Calu3 (cell line): ENCODE measurements at regions of chr22 and their contacts with region 1.

Region 1: DNA sequence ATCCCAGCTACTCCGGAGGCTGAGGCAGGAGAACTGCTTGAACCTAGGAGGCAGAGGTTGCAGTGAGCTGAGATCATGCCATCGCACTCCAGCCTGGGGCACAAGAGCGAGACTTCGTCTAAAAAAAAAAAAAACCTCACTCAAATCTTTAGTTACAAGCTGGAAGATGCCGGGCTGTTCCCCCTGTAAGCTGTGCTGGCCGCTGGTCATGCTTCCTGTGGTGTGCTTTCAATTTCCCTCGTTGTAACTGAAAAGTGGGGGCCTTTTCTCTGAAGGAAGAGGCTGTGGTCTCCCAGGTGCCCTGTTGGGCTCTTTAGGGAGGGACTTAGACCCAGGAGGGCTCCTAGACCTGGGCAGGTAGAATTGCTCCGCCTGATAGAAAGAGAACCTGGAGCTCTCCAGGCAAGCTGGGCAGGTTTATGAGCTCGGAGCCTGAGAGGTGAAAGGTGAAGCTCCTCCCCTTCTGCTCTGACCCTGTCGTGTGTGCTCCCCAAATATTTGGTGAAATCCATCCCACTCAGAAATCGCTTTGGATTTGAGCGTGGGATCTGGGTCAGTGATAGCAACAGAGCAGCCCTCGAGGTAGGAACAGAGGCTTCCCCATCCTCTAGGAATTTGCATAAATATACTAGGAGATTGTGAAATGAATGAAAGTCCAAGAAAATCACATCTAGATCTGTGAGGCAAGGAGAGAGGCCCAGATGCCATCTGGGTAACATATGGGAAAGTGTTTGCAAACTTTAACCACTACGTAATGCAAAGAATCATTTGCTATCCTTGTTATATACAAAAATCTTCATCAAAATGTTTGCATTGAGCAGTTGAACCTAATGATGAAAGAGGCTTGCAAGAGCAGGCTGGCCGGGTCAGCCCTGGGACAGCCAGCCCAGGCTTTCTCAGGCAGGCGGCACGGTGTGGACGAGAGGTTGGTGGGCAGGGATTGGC is 154.3 kb downstream of the FBXO7 start:
- DNase-seq: no peak
- H3K4me3 Mint-ChIP-seq: no peak overlapping the region
- H3K27ac Mint-ChIP-seq: no peak overlapping the region
- H3K4me1 Mint-ChIP-seq: no peaks in the 10 kb centered on the region
- H3K27me3 Mint-ChIP-seq: no peaks in the 10 kb centered on the region
- CTCF ChIP-seq: no peak

Region 2: GRCh38 chr22:32733923-32734514 is 105.1 kb after region 1 on chr22:
- CTCF ChIA-PET with region 1: no interaction called
- intact Hi-C with region 1: no loop called
- DNase-seq: no peak
- H3K4me3 Mint-ChIP-seq: no peak overlapping the region
- H3K27ac Mint-ChIP-seq: no peak overlapping the region
- H3K4me1 Mint-ChIP-seq: no peaks in the 10 kb centered on the region
- H3K27me3 Mint-ChIP-seq: peaks cover 19% of the 10 kb centered on the region
- CTCF ChIP-seq: no peak

Region 3: DNA sequence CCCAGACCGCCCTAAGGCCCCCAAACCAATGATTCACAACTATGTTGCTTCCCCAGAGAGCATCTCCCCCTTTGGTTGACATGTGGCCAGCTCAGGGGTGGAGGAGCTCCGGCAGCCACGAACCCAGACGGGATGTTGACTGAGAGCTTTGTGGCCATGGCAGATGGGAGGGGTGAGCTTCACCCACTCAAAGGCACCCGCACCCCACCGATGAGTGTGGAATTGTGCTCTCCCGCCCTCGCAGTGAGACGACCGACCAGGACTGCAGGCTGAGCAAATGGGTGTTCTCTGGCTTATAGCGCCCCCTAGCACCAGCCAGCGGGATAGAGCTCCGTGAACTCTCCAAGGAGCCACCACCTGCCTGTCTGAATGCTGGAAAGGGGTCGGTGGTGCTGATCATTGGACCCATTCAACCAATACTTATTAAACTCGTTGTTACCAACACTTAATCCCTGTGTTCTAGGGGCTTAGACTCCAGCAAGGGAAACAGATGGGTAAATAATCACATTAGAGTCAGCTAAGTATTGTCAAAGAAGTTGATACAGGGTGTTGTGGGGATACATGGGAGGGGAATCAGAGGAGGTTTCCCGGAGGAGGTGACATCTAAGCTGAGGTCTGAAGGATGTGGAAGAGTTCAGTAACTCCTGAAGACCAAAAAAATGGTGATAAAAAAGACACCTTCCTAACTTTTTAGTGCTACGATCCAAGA is 168.1 kb after region 1 on chr22:
- CTCF ChIA-PET with region 1: interaction called, 10 read pairs
- intact Hi-C with region 1: no loop called
- DNase-seq: peak; percentile 71
- H3K4me3 Mint-ChIP-seq: no peak overlapping the region
- H3K27ac Mint-ChIP-seq: no peak overlapping the region
- H3K4me1 Mint-ChIP-seq: no peaks in the 10 kb centered on the region
- H3K27me3 Mint-ChIP-seq: peaks cover 31% of the 10 kb centered on the region
- CTCF ChIP-seq: peak; percentile 92